Posterior cingulate gyrus (tissue), 11 donors: ENCODE measurements at regions of chr3 and their contacts with region 1.

Region 1: GRCh38 chr3:47522082-47522987 is 8.8 kb upstream of the ELP6 start:
- DNase-seq: peak; percentile 61 to 97 (median 82)

Region 2: GRCh38 chr3:47664519-47664918 is 142.2 kb after region 1 on chr3:
- intact Hi-C with region 1: loop called (anchors 2 kb)
- DNase-seq: no peak

Region 3: GRCh38 chr3:47791193-47791855 is 269.0 kb after region 1 on chr3:
- intact Hi-C with region 1: loop called (anchors 1 kb)
- DNase-seq: peak in 1 of 10 donors; percentile 31